ENCODE measurements at regions of chr2 and their contacts with region 1.

Region 1: DNA sequence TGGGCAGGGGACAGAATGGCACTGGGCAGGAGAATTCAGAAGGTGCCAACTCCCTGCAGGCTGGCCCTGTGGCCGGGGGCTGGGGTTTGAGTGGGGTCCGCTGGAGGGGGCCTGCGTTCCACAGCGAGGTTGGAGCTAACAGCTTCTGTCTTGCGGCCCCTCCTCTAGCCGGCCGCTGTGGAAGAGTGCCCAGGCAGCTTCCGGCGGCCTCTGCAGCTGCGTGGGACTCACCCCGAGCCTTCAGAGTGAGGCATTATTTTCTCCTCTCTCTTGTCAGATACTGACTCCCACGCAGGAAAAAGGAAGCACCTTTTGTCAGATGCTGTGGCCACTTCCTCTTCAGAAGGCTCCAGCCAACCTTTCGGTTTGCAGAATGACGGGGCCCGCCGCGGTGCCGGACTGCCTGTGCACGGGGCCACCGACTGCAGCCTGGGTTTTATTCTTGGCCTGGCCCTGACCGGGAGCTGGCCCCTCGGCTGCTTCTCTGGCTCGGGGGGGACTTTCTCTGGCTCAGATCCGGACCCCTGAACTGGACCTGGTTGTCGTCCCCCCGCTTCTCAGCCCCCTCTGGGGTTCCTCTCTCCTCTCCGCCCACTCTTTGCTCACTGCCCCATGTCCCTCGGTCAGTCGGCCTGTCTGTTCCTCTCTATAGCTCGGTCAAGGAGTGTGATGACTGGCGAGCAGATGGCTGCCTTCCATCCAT is 40.1 kb downstream of the ARHGAP25 start:
- DNase-seq: peak; percentile 78
- ATAC-seq: peak; percentile 86

Region 2: GRCh38 chr2:68832233-68832869 is 57.6 kb after region 1 on chr2:
- intact Hi-C with region 1: loop called (anchors 10 kb)
- DNase-seq: peak; percentile 48
- ATAC-seq: peak; percentile 64